ENCODE measurements at regions of chr1 and their contacts with region 1.

Region 1: DNA sequence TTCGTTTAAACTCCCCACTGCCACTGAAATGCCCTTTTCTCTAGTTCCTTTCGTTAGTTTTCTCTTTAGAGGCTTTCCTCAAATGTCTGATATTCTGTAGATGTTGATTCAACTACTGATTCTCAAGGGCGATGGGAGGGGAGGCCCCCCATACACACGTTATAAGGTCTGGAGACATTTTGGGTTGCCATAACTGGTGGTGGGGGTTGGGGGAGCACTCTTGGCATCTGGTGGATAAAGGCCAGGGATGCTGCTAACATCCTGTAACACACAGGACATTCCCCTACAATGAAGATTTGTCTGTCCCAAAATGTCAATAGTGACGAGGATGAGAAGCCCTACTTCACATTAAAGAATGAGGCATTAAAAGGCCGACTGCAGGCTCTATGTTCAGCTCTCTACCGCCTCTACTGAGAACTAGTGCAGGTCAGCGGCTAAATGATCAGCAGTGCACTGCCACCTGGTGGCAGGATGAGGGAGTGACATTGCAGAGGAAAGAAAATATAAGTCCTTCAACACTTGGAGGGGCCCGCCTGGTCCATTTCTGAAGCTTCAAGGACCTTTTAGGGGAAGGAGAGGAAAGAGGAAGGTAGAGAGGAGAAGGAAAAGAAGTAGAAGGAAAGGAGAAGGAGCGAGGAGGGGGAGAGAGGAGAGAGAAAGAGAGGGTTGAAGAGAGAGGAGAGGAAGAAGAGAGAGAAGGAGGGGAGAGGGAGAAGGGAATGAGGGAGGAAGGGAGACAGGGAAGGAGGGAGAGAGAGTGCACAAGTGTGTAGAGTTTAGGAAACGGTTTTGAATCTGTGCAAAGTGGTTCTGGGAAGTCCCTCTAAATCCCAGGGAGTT is 29.4 kb downstream of the ALG14 start:
- DNase-seq: no peak
- H3K4me3 ChIP-seq: no peak overlapping the region
- CTCF ChIP-seq: peak; percentile 95

Region 2: DNA sequence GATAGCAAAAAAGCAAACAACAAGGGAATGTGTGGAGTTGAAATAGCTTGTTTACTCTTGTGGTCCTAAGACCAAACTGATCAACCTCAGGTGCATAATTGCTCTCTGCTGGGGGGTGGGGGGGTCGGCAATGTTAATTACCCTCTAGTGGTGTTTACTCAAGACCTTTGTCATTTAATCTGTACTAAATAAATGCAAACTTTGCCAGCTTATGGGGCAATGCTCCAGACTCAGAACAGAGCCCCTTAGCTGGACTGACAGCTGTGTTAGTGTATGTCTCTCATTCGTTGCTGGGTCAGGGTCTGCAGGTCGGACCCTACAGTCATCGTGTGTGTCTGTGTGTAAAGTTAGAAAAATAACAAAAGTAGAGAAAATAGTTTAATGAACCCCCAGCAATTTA is 230.4 kb before region 1 on chr1:
- CTCF ChIA-PET with region 1: interaction called, 51 read pairs
- POLR2A ChIA-PET with region 1: no interaction called
- DNase-seq: no peak
- H3K4me3 ChIP-seq: no peak overlapping the region
- CTCF ChIP-seq: no peak

Region 3: DNA sequence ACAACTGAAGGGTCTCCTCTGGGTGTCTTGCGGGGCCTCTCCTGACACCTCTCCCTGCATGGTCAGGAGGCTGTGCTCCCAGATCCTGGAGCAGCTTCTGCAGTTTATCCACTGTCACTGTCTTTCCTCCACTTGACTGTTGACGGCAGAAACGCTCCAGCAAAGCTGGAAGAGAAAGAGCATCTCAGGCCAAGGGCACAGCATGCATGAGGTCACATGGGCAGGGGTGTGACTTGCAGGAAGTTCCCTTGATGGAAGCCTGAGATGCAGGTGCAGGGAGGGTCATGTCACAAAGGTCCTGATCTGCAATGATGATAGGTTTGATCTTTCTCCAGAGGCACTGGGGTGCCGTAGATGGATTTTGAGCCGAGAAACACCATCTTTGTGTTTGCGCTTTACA is 199.9 kb before region 1 on chr1:
- CTCF ChIA-PET with region 1: interaction called, 384 read pairs
- POLR2A ChIA-PET with region 1: no interaction called
- DNase-seq: no peak
- H3K4me3 ChIP-seq: no peak overlapping the region
- CTCF ChIP-seq: no peak

Region 4: GRCh38 chr1:94884106-94884505 is 159.3 kb before region 1 on chr1:
- CTCF ChIA-PET with region 1: interaction called, 13 read pairs
- POLR2A ChIA-PET with region 1: no interaction called
- DNase-seq: no peak
- H3K4me3 ChIP-seq: no peak overlapping the region
- CTCF ChIP-seq: no peak

Region 5: DNA sequence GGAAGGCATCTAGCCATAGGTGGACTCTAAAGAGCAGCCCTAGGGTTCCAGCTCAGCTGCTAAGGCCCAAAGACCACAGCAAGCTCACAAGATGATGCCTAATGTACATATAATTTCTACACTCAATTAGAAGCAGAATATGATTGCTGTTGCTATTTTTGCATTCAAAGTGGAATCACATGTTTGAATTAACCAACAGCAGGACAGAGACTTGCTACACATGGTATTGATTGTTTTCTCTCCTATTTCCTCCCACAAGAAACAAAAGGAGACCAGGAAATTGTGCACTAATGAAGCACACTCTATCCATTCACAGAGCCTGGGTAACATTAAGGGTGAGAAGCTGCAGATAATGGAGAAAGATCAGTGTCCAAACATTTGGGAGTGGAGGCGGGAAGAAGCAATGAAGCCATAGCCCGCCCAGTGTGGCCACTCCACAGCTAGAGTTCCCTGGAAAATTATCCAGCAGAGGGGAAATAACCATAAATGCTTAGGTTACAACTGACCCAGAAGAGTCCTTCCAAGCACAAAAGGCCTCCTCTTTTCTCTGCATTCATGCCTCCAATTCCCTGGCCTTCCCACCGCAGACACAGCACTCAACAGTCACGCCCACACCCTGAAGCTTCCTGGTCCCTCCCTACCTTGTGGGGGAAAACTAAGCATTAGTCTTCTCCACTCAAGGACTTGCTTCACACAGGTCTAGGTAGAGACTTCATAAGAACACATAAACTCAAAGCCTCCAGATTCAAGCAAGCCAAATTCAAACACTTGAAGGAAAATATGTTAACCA is 123.9 kb before region 1 on chr1:
- CTCF ChIA-PET with region 1: interaction called, 65 read pairs
- POLR2A ChIA-PET with region 1: interaction called, 3 read pairs
- DNase-seq: no peak
- H3K4me3 ChIP-seq: no peak overlapping the region
- CTCF ChIP-seq: no peak

Region 6: GRCh38 chr1:95023399-95024043 is 19.8 kb before region 1 on chr1:
- CTCF ChIA-PET with region 1: interaction called, 23 read pairs
- POLR2A ChIA-PET with region 1: no interaction called
- DNase-seq: peak; percentile 75
- H3K4me3 ChIP-seq: no peak overlapping the region
- CTCF ChIP-seq: no peak